ENCODE measurements at regions of chr12 and their contacts with region 1.

Region 1: GRCh38 chr12:58919231-58920101 is 838 bp downstream of the LRIG3 start:
- DNase-seq: peak in 1 of 2 donors; percentile 90
- H3K4me3 ChIP-seq: peak overlapping the region; percentile 73
- CTCF ChIP-seq: no peak
- POLR2A ChIP-seq: no peak

Region 2: DNA sequence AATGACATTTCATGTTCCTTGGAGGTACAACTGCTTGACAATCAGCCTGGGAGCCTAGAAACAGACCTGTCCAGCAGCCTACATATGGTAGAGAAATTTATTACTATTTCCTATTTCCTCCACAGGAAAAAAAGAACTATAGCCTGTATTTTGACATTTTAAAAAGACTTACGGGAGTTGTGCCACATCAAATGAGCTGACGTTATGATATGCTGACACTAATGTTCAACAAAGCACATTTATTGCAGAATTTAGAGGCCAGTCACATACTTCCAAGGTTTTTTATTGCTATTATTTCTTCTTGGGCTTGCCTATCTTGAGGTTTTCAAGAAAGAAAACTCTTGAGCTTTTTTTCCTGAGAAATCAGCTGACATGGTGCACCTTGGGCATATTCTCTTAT is 304.4 kb before region 1 on chr12:
- intact Hi-C with region 1: no loop called
- DNase-seq: no peak
- H3K4me3 ChIP-seq: no peak overlapping the region
- CTCF ChIP-seq: no peak
- POLR2A ChIP-seq: no peak

Region 3: DNA sequence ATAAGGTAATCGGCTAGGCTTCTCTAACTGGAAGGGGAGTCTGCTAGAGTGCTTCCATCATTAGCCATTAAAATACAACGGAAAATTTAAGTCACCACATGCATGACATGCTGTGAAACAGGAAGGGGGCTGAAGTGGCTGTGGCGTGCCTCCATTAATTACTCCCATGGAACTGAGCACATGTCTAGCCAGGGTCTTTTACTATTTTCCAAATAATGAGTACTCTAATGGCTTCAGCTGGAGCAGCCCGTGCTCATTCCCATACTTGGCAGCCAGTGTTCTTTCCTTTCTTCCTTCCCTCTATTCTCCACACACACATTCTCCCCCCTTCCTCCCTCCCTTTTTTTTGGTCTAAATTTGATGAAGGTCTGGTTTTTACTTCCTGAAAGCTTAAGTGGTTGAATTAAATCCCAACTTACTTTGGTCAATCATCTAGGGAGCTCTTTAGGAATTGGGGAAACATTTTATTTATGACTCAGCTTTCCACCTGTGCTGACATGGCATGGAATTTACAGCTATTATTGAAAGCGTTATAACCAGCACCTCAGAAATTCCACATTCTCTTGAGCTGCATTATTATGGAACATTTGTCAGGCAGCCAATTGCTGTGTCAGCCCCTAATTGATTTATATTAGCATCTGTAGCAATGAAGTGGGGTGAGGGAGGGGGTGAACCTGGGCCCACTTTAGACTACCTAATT is 71.4 kb before region 1 on chr12:
- intact Hi-C with region 1: no loop called
- DNase-seq: no peak
- H3K4me3 ChIP-seq: no peak overlapping the region
- CTCF ChIP-seq: no peak
- POLR2A ChIP-seq: no peak

Region 4: GRCh38 chr12:59055204-59055839 is 135.9 kb after region 1 on chr12:
- intact Hi-C with region 1: loop called (anchors 10 kb)
- DNase-seq: no peak
- H3K4me3 ChIP-seq: no peak overlapping the region
- CTCF ChIP-seq: no peak
- POLR2A ChIP-seq: no peak